Endothelial cell of umbilical vein (primary cell): ENCODE measurements at regions of chr2 and their contacts with region 1.

Region 1: DNA sequence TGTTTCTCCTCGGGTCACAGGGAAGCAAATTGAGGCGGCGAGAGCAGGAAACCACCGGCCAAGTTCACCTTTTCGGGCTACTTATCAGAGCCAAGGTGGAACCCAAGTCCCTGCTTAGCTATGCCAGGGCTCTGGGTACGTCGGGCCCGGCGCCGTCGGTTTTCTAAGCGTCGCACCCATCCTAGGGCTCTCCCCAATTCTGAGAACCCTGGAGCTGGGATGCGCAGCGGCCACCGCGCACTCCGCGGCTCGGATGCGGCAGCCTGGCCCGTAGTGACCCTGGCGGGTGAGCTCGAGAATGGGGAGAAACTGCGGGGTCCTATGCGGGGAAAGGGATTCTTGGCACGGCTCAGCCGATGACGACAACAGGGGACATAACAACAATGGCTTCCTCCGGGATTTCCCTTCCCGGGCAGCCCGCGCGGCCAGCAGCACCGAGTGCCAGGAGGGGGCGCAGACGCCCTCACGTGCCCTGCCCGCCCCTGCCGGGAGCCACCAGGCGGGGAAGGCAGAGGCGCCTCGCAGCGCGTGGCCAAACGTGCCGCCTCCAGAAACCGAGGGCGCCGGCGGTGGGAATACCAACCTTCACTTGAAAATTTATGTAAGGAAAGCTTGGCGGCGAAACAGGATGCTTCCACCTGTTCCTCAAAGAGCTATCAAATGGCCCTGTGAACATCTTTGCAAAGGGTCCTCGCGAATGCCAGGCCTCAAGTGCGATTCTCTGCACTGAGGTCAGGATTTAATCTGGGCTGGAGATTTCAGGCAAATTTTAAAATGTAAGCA is 2.1 kb upstream of the SLC30A3 start:
- DNase-seq: peak; percentile 87
- H3K4me3 ChIP-seq: peak overlapping the region in 2 of 3 experiments; percentile 32 to 82
- H3K27ac ChIP-seq: no peak overlapping the region
- H3K4me1 ChIP-seq: peaks cover 22% of the 10 kb centered on the region
- H3K27me3 ChIP-seq: peaks cover 19 to 42% of the 10 kb centered on the region in 2 experiments
- CTCF ChIP-seq: peak; percentile 90 to 93
- POLR2A ChIP-seq: no peak

Region 2: DNA sequence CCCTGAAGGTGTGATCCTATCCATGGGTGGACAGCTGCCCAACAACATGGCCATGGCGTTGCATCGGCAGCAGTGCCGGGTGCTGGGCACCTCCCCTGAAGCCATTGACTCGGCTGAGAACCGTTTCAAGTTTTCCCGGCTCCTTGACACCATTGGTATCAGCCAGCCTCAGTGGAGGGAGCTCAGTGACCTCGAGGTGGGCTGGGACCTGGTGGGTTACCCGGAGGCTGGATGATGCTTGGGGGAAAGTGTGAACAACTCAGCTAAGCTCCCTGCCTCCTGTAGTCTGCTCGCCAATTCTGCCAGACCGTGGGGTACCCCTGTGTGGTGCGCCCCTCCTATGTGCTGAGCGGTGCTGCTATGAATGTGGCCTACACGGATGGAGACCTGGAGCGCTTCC is 31.6 kb before region 1 on chr2:
- CTCF ChIA-PET with region 1: no interaction called
- POLR2A ChIA-PET with region 1: no interaction called
- dilution Hi-C with region 1: no loop called
- intact Hi-C with region 1: no loop called
- DNase-seq: no peak
- H3K4me3 ChIP-seq: no peak overlapping the region
- H3K27ac ChIP-seq: no peak overlapping the region
- H3K4me1 ChIP-seq: no peaks in the 10 kb centered on the region
- H3K27me3 ChIP-seq: no peaks in the 10 kb centered on the region
- CTCF ChIP-seq: no peak
- POLR2A ChIP-seq: no peak

Region 3: DNA sequence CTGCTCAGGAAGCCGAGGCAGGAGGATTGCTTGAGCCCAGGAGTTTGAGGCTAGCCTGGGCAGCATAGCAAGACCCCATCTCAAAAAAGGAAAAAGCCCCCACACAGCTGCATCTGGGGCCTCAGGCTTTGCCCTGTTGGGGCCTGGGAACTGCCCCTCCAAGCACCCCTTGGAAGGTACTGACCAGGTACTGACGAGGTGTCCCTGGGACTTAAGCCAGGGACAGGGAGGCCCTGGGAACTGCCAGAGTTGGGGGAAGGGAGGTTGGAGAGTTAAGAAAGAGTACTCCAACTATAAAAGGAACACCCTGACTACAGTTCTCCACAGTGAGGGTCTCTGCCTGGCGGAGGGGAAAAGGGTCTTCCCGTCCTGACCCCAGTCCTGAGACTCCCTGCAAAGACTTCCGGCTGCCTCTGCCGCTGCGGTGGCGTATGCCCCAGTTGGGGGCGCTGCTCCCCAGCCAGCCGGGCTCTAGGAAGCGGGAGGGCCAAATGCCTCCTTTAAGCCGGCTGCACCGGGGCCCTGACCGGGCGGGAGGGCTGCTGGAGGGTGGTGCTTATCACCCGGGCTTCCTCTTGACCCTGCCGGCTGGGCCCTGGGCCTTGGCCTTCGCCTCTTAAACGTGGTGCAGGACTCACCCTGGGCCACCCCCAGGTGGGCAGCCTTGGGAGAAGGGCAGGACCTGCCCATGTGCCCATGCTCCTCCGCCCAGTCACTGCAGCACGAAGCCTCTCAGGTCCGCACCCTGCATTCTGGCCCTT is 14.9 kb before region 1 on chr2:
- CTCF ChIA-PET with region 1: interaction called, 4 read pairs
- POLR2A ChIA-PET with region 1: no interaction called
- dilution Hi-C with region 1: no loop called
- intact Hi-C with region 1: loop called (anchors 1 kb)
- DNase-seq: peak; percentile 64
- H3K4me3 ChIP-seq: no peak overlapping the region
- H3K27ac ChIP-seq: no peak overlapping the region
- H3K4me1 ChIP-seq: peaks cover 15% of the 10 kb centered on the region
- H3K27me3 ChIP-seq: no peaks in the 10 kb centered on the region
- CTCF ChIP-seq: peak; percentile 83 to 89
- POLR2A ChIP-seq: no peak

Region 4: GRCh38 chr2:27291865-27292264 is 26.9 kb after region 1 on chr2:
- CTCF ChIA-PET with region 1: interaction called, 25 read pairs
- POLR2A ChIA-PET with region 1: interaction called, 3 read pairs
- dilution Hi-C with region 1: no loop called
- intact Hi-C with region 1: loop called (anchors 2 kb)
- DNase-seq: no peak
- H3K4me3 ChIP-seq: no peak overlapping the region
- H3K27ac ChIP-seq: no peak overlapping the region
- H3K4me1 ChIP-seq: peaks cover 44% of the 10 kb centered on the region
- H3K27me3 ChIP-seq: no peaks in the 10 kb centered on the region
- CTCF ChIP-seq: peak in 1 of 2 donors; percentile 6
- POLR2A ChIP-seq: no peak

Region 5: GRCh38 chr2:27431395-27431794 is 166.5 kb after region 1 on chr2:
- CTCF ChIA-PET with region 1: no interaction called
- POLR2A ChIA-PET with region 1: no interaction called
- dilution Hi-C with region 1: no loop called
- intact Hi-C with region 1: no loop called
- DNase-seq: peak; percentile 64
- H3K4me3 ChIP-seq: no peak overlapping the region
- H3K27ac ChIP-seq: peak overlapping the region; percentile 33
- H3K4me1 ChIP-seq: peaks cover 26% of the 10 kb centered on the region
- H3K27me3 ChIP-seq: no peaks in the 10 kb centered on the region
- CTCF ChIP-seq: no peak
- POLR2A ChIP-seq: no peak